ENCODE measurements at regions of chr20 and their contacts with region 1.

Region 1: GRCh38 chr20:59087829-59088433 is 45.3 kb upstream of the PRELID3B start:
- DNase-seq: peak; percentile 89
- H3K4me3 Mint-ChIP-seq: no peak overlapping the region
- H3K27ac Mint-ChIP-seq: no peak overlapping the region
- H3K4me1 Mint-ChIP-seq: peaks cover 4% of the 10 kb centered on the region
- H3K27me3 Mint-ChIP-seq: no peaks in the 10 kb centered on the region

Region 2: GRCh38 chr20:58907399-58908137 is 180.4 kb before region 1 on chr20:
- CTCF ChIA-PET with region 1: no interaction called
- POLR2A ChIA-PET with region 1: no interaction called
- intact Hi-C with region 1: no loop called
- DNase-seq: peak; percentile 72
- H3K4me3 Mint-ChIP-seq: peak overlapping the region; percentile 55
- H3K27ac Mint-ChIP-seq: peak overlapping the region; percentile 81
- H3K4me1 Mint-ChIP-seq: peaks cover 52% of the 10 kb centered on the region
- H3K27me3 Mint-ChIP-seq: no peaks in the 10 kb centered on the region

Region 3: DNA sequence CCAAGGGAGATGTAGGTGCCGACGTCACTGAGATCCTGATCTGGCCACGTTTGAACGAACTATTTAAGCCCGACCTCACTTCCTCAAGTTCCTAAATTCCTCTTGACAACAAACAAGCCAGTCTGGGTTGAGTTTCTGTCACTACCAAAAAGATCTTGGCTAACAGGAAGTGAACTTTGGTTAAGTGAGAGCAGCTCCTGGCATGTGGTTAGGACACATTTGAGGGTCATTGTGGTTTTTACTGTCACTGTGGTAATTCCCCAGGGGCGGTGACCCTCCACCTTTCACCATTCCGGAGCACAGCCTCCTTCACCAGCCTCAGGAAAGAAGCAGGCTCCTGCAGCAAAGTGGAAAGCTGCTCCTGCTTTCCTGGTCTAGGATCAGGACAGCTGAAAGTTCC is 32.6 kb after region 1 on chr20:
- CTCF ChIA-PET with region 1: interaction called, 33 read pairs
- POLR2A ChIA-PET with region 1: no interaction called
- intact Hi-C with region 1: no loop called
- DNase-seq: peak; percentile 65
- H3K4me3 Mint-ChIP-seq: no peak overlapping the region
- H3K27ac Mint-ChIP-seq: peak overlapping the region; percentile 94
- H3K4me1 Mint-ChIP-seq: peaks cover 71% of the 10 kb centered on the region
- H3K27me3 Mint-ChIP-seq: no peaks in the 10 kb centered on the region

Region 4: DNA sequence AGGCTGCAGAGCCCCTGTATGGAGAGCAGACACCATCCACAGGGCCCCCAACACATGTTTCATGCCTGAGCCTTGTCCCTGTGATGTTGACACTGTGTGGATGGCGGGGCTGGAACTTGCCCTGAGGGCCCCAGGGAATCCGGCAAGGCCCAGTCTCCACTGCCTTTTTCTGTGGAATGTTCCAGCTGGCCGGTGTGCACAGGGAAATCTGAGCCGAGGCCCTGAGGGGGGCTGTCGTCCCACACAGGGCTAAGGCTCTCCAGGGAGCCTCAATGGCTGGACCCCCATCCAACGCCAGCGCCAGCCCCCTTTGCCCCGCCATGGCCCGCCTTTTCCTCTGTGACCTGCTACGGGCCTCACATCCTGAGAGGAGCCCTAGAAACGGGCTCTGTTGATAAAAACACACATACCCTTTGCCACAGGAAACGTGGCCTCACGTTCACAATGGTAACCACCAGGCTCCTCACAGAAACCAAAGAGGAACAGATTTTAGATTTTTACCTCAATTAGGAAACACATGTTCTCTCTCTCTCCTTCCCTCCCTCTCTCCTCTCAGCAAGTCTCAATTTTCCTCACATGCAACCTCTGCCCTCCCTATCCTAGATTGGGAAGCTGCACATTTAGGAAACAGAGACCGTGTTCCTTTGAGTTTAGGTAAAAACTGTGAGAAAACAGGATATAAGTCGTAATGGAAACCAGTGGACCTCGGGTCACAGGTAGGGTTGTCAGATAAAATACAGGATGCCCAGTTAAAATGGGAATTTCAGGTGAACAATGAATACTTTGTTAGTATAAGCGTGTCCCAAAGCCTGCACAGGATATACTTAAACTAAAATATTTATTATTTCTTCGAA is 61.9 kb after region 1 on chr20:
- CTCF ChIA-PET with region 1: interaction called, 23 read pairs
- POLR2A ChIA-PET with region 1: no interaction called
- intact Hi-C with region 1: no loop called
- DNase-seq: peak; percentile 85
- H3K4me3 Mint-ChIP-seq: peak overlapping the region; percentile 62
- H3K27ac Mint-ChIP-seq: peak overlapping the region; percentile 92
- H3K4me1 Mint-ChIP-seq: peaks cover 88% of the 10 kb centered on the region
- H3K27me3 Mint-ChIP-seq: no peaks in the 10 kb centered on the region

Region 5: GRCh38 chr20:59177261-59178250 is 89.6 kb after region 1 on chr20:
- CTCF ChIA-PET with region 1: interaction called, 13 read pairs
- POLR2A ChIA-PET with region 1: no interaction called
- intact Hi-C with region 1: no loop called
- DNase-seq: peak; percentile 63
- H3K4me3 Mint-ChIP-seq: peak overlapping the region; percentile 67
- H3K27ac Mint-ChIP-seq: peak overlapping the region; percentile 93
- H3K4me1 Mint-ChIP-seq: peaks cover 84% of the 10 kb centered on the region
- H3K27me3 Mint-ChIP-seq: no peaks in the 10 kb centered on the region

Region 6: GRCh38 chr20:59214606-59215547 is 126.9 kb after region 1 on chr20:
- CTCF ChIA-PET with region 1: interaction called, 12 read pairs
- POLR2A ChIA-PET with region 1: no interaction called
- intact Hi-C with region 1: no loop called
- DNase-seq: no peak
- H3K4me3 Mint-ChIP-seq: no peak overlapping the region
- H3K27ac Mint-ChIP-seq: no peak overlapping the region
- H3K4me1 Mint-ChIP-seq: peaks cover 6% of the 10 kb centered on the region
- H3K27me3 Mint-ChIP-seq: no peaks in the 10 kb centered on the region

Region 7: DNA sequence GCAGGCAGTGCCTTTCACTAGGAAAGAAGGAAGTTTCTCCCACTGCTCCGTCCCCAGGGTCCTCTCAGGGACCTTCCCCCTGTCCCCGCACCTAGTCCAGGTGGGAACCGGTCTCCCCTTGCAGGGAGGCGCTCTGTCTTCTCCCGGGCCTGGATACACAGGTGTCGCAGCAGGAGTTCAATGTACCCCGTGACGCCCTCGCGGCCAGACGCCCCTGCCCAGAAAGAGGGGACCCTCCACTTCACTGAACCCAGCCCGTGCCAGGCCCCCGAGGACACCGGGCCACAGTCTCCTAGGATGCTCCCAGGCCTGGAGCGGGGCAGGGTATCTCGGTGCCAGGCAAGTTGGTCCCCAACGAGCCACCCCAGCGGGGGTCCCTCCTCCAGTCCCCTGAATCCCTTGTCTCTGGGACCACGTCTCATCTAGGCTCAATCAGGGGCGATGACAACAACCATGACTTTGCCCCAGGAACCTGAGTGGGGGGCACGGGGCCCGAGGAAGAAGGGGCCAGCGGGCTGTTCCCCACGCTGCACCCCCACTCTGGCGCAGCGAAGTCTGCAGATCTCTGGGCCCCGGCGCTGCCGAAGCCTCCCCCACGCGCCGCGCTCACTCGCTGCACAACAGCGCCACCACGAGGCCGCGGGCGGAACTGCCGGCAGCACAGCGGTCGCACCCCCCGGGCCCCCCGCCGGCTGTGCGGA is 315.5 kb after region 1 on chr20:
- CTCF ChIA-PET with region 1: interaction called, 12 read pairs
- POLR2A ChIA-PET with region 1: no interaction called
- intact Hi-C with region 1: loop called (anchors 10 kb)
- DNase-seq: peak; percentile 77
- H3K4me3 Mint-ChIP-seq: peak overlapping the region; percentile 57
- H3K27ac Mint-ChIP-seq: no peak overlapping the region
- H3K4me1 Mint-ChIP-seq: peaks cover 2% of the 10 kb centered on the region
- H3K27me3 Mint-ChIP-seq: peaks cover 14% of the 10 kb centered on the region